ENCODE measurements at regions of chr16 and their contacts with region 1.

Region 1: GRCh38 chr16:82263521-82264143 is 93.6 kb upstream of the MPHOSPH6 start:
- DNase-seq: peak; percentile 42
- H3K4me3 ChIP-seq: no peak overlapping the region
- H3K27ac ChIP-seq: no peak overlapping the region
- H3K4me1 ChIP-seq: no peaks in the 10 kb centered on the region
- H3K27me3 ChIP-seq: peaks cover 8% of the 10 kb centered on the region
- CTCF ChIP-seq: peak; percentile 78 to 89 (median 86)
- EP300 ChIP-seq: no peak
- POLR2A ChIP-seq: no peak

Region 2: GRCh38 chr16:81873843-81874752 is 389.5 kb before region 1 on chr16:
- in situ Hi-C with region 1: no loop called
- intact Hi-C with region 1: no loop called
- DNase-seq: peak; percentile 51
- H3K4me3 ChIP-seq: no peak overlapping the region
- H3K27ac ChIP-seq: no peak overlapping the region
- H3K4me1 ChIP-seq: no peaks in the 10 kb centered on the region
- H3K27me3 ChIP-seq: no peaks in the 10 kb centered on the region
- CTCF ChIP-seq: peak; percentile 65 to 82 (median 74)
- EP300 ChIP-seq: no peak
- POLR2A ChIP-seq: no peak

Region 3: GRCh38 chr16:82302042-82302727 is 38.6 kb after region 1 on chr16:
- in situ Hi-C with region 1: no loop called
- intact Hi-C with region 1: no loop called
- DNase-seq: no peak
- H3K4me3 ChIP-seq: no peak overlapping the region
- H3K27ac ChIP-seq: no peak overlapping the region
- H3K4me1 ChIP-seq: no peaks in the 10 kb centered on the region
- H3K27me3 ChIP-seq: no peaks in the 10 kb centered on the region
- CTCF ChIP-seq: no peak
- EP300 ChIP-seq: no peak
- POLR2A ChIP-seq: no peak

Region 4: GRCh38 chr16:82329485-82330180 is 66.0 kb after region 1 on chr16:
- in situ Hi-C with region 1: no loop called
- intact Hi-C with region 1: no loop called
- DNase-seq: no peak
- H3K4me3 ChIP-seq: no peak overlapping the region
- H3K27ac ChIP-seq: no peak overlapping the region
- H3K4me1 ChIP-seq: no peaks in the 10 kb centered on the region
- H3K27me3 ChIP-seq: no peaks in the 10 kb centered on the region
- CTCF ChIP-seq: no peak
- EP300 ChIP-seq: no peak
- POLR2A ChIP-seq: no peak

Region 5: DNA sequence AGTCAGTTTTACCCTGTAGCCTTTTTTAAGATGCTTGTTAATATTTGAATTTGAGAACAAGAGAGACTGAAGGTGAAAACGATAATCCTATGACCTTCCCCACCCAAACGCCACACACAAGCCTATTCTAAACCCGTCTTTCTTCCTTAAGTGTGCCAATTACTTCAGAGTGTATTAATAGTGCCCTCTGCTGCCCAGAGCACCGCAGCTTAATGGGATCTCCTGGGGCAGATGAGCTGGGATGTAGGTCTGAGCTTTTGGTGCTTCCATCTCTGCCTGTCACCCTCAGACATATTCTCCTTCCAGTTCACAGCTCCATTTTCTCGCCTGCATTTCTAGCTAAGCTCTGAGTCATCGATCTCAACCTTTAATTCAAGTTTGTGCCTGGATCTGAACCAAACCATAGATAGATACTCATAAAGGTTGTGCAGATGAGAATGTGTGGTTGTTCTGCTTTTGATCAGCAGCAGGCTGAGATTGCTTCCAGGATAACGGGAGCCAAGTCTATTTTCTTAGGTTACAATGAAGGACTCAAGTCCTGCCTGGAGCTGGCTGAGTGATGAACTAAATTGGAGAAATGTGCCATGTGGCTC is 316.8 kb after region 1 on chr16:
- in situ Hi-C with region 1: loop called in 2 of 4 experiments (anchors 10 to 25 kb)
- intact Hi-C with region 1: no loop called
- DNase-seq: no peak
- H3K4me3 ChIP-seq: no peak overlapping the region
- H3K27ac ChIP-seq: no peak overlapping the region
- H3K4me1 ChIP-seq: peaks cover 0 to 9% (median 0%) of the 10 kb centered on the region in 4 donors
- H3K27me3 ChIP-seq: no peaks in the 10 kb centered on the region
- CTCF ChIP-seq: peak in 1 of 5 experiments; percentile 25
- EP300 ChIP-seq: no peak
- POLR2A ChIP-seq: no peak

Region 6: DNA sequence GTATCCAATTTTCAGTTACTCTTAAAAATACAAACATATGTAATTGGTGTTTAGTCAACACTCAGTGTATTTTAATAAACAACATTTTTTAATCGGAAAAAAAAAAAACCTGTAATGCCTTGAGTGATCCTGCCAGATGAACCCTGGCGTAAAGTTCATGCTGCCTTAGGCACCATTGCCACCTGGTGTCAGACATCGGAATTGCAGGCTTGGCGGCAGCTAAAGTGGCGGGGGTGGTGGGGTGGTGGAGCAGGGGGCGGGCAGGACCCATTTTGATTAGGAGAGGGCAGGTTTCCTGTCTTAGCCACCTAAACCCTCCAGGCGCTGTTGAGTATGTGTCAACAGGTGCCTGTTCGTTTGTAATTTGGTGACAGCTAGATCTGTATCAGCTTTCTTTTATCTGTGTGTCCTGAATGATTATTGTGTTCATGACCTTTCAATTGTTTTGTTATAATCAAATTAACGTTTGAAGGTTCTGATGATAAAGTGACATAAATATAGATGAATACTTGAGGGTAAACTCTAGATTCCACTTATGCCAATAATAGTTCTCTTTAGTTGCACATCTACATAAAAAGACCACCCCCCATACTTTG is 951.9 kb after region 1 on chr16:
- in situ Hi-C with region 1: loop called in 3 of 4 experiments (anchors 10 to 25 kb)
- intact Hi-C with region 1: no loop called
- DNase-seq: peak; percentile 37
- H3K4me3 ChIP-seq: no peak overlapping the region
- H3K27ac ChIP-seq: no peak overlapping the region
- H3K4me1 ChIP-seq: no peaks in the 10 kb centered on the region
- H3K27me3 ChIP-seq: no peaks in the 10 kb centered on the region
- CTCF ChIP-seq: peak; percentile 67 to 92 (median 82)
- EP300 ChIP-seq: no peak
- POLR2A ChIP-seq: no peak